Heart left ventricle (tissue), 16 donors: ENCODE measurements at regions of chr2 and their contacts with region 1.

Region 1: GRCh38 chr2:181891258-181891965 is at the start of gene ITPRID2:
- DNase-seq: peak; percentile 90 to 94 (median 92)
- ATAC-seq: peak; percentile 85 to 98 (median 94)
- H3K4me3 ChIP-seq: peak within 1 kb of the TSS; percentile 71 to 94 (median 86)
- H3K27ac ChIP-seq: peak within 1 kb of the TSS; percentile 94 to 98 (median 98)
- H3K4me1 ChIP-seq: peaks cover 7 to 50% (median 36%) of the 10 kb centered on the region in 12 donors
- H3K27me3 ChIP-seq: no peaks in the 10 kb centered on the region
- CTCF ChIP-seq: peak in 8 of 12 donors; percentile 16 to 41 (median 22)
- POLR2A ChIP-seq: peak in 1 of 2 donors; percentile 27
- total RNA-seq, gene ITPRID2: 37.8 to 85.9 (median 59.8) TPM

Region 2: DNA sequence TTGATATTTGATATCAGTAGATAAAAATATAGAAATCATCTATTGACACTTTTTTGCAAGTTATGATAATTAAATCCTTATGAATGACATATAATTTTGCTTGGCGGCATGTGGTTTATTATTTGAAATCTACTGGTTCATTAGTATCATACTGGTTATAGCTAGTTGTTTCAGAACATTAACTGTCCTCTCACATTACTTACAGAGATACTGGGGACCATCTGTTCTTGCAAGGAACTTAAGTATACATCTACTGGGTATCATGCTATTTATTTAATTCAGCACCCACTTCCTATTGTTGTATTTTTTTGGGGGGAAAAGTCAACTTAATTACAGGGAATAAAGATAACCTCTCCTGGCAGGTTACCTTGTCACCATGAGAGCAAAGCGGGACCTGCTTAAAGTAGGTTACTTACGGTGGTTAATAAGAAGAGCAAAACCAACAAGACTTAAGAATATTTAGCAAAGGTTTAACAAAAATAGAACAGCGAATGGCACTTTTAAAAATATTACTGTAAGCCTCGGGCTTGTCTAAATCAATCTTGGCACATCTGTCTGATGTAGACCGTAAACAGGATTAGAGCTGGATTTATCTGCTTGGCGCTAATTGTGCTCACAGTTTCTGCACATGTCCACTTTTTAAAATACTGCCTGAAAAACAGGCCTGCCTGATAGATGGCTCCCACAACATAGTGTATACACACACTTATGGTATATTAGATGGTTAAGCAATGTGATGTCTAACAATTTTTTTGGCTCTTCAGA is 276.4 kb before region 1 on chr2:
- intact Hi-C with region 1: no loop called
- DNase-seq: no peak
- ATAC-seq: no peak
- H3K4me3 ChIP-seq: no peak overlapping the region
- H3K27ac ChIP-seq: no peak overlapping the region
- H3K4me1 ChIP-seq: no peaks in the 10 kb centered on the region
- H3K27me3 ChIP-seq: peaks cover 0 to 9% (median 0%) of the 10 kb centered on the region in 9 donors
- CTCF ChIP-seq: no peak
- POLR2A ChIP-seq: no peak

Region 3: GRCh38 chr2:181810823-181811695 is 80.4 kb before region 1 on chr2:
- intact Hi-C with region 1: loop called in 3 of 10 experiments (anchors 5 to 10 kb)
- DNase-seq: peak in 3 of 5 donors; percentile 27 to 40 (median 36)
- ATAC-seq: peak; percentile 69 to 95 (median 91)
- H3K4me3 ChIP-seq: peak overlapping the region in 3 of 12 donors; percentile 7 to 17 (median 11)
- H3K27ac ChIP-seq: peak overlapping the region in 10 of 12 donors; percentile 8 to 65 (median 42)
- H3K4me1 ChIP-seq: peaks cover 0 to 32% (median 9%) of the 10 kb centered on the region in 12 donors
- H3K27me3 ChIP-seq: no peaks in the 10 kb centered on the region
- CTCF ChIP-seq: no peak
- POLR2A ChIP-seq: no peak

Region 4: DNA sequence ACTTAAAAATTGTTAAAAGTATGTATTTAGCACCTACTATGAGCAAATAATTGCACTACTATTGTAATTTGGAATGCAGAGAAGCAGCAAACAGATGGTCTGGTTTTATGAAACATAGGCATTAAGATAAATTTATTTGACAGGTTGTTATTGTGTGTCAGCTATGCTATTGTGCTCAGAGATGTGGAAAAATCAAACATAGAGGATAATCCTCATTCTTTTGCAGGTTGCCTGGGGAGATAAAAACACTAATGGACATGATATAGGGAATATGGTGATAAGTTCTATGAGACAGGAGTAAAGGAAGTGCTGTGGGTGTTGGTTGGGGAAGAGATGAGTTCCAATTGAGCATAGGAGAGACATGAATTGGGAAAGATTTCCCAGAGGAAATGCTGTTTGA is 165.6 kb after region 1 on chr2:
- intact Hi-C with region 1: loop called in 1 of 10 experiments (anchors 5 kb)
- DNase-seq: no peak
- ATAC-seq: no peak
- H3K4me3 ChIP-seq: no peak overlapping the region
- H3K27ac ChIP-seq: peak overlapping the region in 1 of 12 donors; percentile 17
- H3K4me1 ChIP-seq: peaks cover 0 to 23% (median 0%) of the 10 kb centered on the region in 12 donors
- H3K27me3 ChIP-seq: no peaks in the 10 kb centered on the region
- CTCF ChIP-seq: no peak
- POLR2A ChIP-seq: no peak